CD8-positive, alpha-beta T cell (primary cell): ENCODE measurements at regions of chr7 and their contacts with region 1.

Region 1: GRCh38 chr7:144391823-144392255 is 11.7 kb downstream of the NOBOX start:
- DNase-seq: peak in 3 of 9 experiments; percentile 15 to 72 (median 64)
- ATAC-seq: peak; percentile 71
- H3K4me3 ChIP-seq: no peak overlapping the region
- H3K4me3 Mint-ChIP-seq: peak overlapping the region; percentile 57
- H3K27ac ChIP-seq: no peak overlapping the region
- H3K27ac Mint-ChIP-seq: no peak overlapping the region
- H3K4me1 ChIP-seq: no peaks in the 10 kb centered on the region
- H3K4me1 Mint-ChIP-seq: peaks cover 4% of the 10 kb centered on the region
- H3K27me3 ChIP-seq: no peaks in the 10 kb centered on the region
- H3K27me3 Mint-ChIP-seq: no peaks in the 10 kb centered on the region
- CTCF ChIP-seq: peak; percentile 84

Region 2: DNA sequence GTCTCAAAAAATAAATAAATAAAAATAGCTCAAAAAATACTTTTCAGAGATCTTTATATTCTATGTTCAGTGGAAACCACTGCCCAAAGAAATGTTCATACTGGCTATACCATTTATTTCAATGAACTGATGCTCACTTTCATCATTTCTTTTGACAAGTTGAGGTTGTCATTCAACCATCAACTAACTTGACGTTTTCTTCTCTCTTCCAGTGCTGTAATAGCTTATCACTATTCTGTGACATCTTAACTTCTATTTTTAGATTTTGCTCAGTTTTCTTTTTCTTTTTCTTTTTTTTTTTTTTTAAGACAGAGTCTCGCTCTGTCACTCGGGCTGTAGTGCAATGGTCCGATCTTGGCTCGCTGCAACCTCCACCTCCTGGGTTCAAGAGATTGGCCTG is 217.2 kb before region 1 on chr7:
- CTCF ChIA-PET with region 1: interaction called, 12 read pairs
- POLR2A ChIA-PET with region 1: no interaction called
- intact Hi-C with region 1: loop called in 1 of 2 experiments (anchors 5 kb)
- DNase-seq: no peak
- ATAC-seq: no peak
- H3K4me3 ChIP-seq: no peak overlapping the region
- H3K4me3 Mint-ChIP-seq: no peak overlapping the region
- H3K27ac ChIP-seq: no peak overlapping the region
- H3K27ac Mint-ChIP-seq: no peak overlapping the region
- H3K4me1 ChIP-seq: no peaks in the 10 kb centered on the region
- H3K4me1 Mint-ChIP-seq: peaks cover 3% of the 10 kb centered on the region
- H3K27me3 ChIP-seq: no peaks in the 10 kb centered on the region
- H3K27me3 Mint-ChIP-seq: peaks cover 17% of the 10 kb centered on the region
- CTCF ChIP-seq: no peak

Region 3: DNA sequence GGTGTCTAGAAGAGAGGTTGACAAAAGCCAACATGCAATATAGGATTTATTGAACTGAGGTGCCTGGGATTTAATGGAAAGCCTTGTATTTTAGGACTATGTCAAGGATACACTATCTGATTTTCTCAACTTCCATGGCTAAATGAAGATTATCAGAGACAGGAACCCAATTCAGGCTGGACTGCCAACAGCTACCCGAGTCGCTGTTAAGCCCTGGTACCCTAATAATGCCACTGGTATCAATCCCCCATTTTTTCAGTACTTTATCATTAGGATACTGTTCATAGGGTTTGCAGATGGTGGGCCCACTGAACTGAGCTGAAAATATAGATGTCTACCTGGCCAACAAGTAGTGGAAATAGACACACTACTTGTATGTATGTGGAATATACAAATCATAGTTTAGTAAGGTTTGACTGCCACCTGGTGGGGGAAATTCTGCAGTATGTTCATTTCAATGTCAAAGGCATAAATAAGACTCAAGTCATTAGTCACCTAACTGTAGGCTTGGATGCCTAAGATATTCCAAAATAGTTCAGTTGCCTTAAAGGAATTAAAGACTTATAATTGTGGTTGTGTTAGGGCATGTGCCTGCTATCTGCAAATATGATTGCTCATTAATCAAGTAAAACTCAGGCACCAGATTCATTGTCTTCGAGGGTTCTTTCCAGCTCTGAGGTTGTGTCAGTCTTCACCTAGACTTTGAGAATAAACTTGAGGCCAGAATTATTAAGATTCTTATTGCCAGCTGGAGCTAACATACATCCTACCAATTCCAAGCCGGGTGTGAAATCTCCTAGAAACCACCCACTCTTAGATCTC is 45.7 kb after region 1 on chr7:
- CTCF ChIA-PET with region 1: interaction called, 15 read pairs
- POLR2A ChIA-PET with region 1: no interaction called
- intact Hi-C with region 1: no loop called
- DNase-seq: peak in 8 of 9 experiments; percentile 1 to 57 (median 34)
- ATAC-seq: no peak
- H3K4me3 ChIP-seq: no peak overlapping the region
- H3K4me3 Mint-ChIP-seq: no peak overlapping the region
- H3K27ac ChIP-seq: no peak overlapping the region
- H3K27ac Mint-ChIP-seq: no peak overlapping the region
- H3K4me1 ChIP-seq: no peaks in the 10 kb centered on the region
- H3K4me1 Mint-ChIP-seq: no peaks in the 10 kb centered on the region
- H3K27me3 ChIP-seq: no peaks in the 10 kb centered on the region
- H3K27me3 Mint-ChIP-seq: peaks cover 14% of the 10 kb centered on the region
- CTCF ChIP-seq: peak; percentile 39

Region 4: GRCh38 chr7:145599376-145599775 is 1207.5 kb after region 1 on chr7:
- CTCF ChIA-PET with region 1: no interaction called
- POLR2A ChIA-PET with region 1: no interaction called
- intact Hi-C with region 1: no loop called
- DNase-seq: no peak
- ATAC-seq: no peak
- H3K4me3 ChIP-seq: no peak overlapping the region
- H3K4me3 Mint-ChIP-seq: no peak overlapping the region
- H3K27ac ChIP-seq: no peak overlapping the region
- H3K27ac Mint-ChIP-seq: no peak overlapping the region
- H3K4me1 ChIP-seq: no peaks in the 10 kb centered on the region
- H3K4me1 Mint-ChIP-seq: no peaks in the 10 kb centered on the region
- H3K27me3 ChIP-seq: no peaks in the 10 kb centered on the region
- H3K27me3 Mint-ChIP-seq: no peaks in the 10 kb centered on the region
- CTCF ChIP-seq: no peak